ENCODE measurements at regions of chr1 and their contacts with region 1.

Region 1: DNA sequence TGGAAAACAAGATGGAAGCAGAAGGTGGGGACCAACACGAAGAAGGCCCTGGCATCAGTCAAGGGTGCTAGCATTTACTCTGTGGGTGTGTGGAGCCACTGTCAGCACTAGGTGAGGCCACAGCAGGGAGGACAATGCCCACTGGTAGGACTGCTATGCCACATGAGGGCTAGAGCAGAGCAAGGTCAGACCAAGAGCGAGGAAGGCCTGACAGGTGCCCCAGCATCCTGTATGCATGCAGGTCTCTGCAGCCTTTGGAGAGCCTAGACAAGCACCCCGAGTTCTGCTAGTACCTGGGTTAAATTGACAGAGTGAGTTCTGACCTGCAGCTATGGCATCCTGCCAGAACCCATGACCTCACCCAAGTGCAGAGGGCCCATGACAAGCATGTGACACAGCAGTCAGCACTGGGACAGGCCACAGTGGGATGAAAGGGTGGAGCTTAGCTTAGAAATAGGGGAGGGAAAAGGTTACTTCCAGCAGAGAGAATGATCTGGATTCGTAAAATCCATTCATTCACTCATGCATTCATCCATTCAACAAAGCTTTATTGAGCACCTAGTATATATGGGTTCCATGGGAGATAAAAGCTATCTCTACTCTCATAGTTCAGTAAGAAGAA is 9.0 kb upstream of the CSF1 start:
- DNase-seq: peak; percentile 43
- H3K4me3 ChIP-seq: no peak overlapping the region
- H3K27ac ChIP-seq: no peak overlapping the region
- H3K4me1 ChIP-seq: peaks cover 26% of the 10 kb centered on the region
- H3K27me3 ChIP-seq: no peaks in the 10 kb centered on the region
- CTCF ChIP-seq: no peak

Region 2: DNA sequence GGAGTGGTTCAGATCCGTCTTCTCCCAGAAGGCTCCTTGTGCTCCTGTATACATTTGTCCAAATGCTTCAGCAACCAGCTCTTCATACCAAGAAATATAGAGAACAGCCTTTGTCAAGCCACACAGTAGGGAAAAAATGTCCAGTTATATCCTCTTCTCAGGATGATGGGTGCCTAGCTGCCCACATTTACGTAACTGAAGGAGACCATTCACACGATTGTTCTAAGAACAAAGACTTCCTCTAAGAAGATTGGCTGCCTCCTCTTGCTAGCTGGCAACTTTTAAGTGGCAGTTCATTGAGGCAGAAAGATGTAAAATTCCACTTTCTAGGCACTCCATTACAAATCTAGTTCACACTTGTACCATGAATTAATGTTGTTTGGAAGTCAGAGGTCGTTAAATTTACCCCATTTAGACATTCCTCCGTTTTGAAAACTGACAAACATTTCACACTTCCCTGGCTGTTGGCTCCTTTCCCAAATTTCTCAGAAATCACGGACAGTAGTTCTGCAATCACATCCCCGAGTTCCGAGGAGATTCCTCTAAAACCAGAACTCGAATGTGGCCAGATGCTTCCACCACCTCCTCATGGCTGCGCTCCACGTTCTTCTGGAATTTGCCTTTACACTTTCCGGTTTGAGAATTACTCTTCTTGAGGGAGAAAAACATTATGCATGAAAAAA is 36.6 kb before region 1 on chr1:
- CTCF ChIA-PET with region 1: no interaction called
- dilution Hi-C with region 1: loop called (anchors 5 kb)
- in situ Hi-C with region 1: no loop called
- intact Hi-C with region 1: no loop called
- DNase-seq: no peak
- H3K4me3 ChIP-seq: no peak overlapping the region
- H3K27ac ChIP-seq: no peak overlapping the region
- H3K4me1 ChIP-seq: no peaks in the 10 kb centered on the region
- H3K27me3 ChIP-seq: no peaks in the 10 kb centered on the region
- CTCF ChIP-seq: no peak